Transverse colon (tissue), 4 donors: ENCODE measurements at regions of chr11 and their contacts with region 1.

Region 1: DNA sequence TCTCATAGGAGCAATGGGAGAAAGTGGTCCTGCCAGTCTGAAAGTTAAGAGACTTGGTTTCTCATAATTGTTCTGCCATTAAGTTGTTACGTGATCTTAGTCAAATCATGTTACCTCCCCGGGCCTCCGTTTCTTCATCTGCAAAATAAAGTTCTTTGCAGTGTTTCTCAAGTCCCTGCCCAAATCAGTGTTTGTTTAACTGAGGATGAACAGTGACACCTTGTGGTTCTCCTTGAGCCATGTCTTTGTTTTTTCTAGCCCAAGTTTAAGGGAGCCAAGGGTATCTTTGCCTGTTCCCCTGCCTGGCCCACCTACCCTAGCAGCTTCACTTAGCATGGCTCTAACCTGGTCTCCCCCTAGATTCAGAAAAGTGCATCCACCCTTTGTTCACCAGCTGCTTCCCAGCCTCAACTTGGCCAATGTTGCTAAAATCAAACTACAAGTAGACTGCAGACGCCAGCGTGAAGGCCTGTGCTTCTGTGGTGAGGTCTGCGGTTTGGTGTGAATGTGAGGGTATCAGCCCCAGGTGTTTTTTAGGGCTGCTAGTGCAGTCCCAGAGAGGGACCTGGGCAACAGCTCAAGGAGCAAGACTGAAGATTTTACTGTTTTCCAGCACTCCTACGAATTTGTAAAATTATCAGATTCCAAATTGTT is 35.5 kb downstream of the FZD4 start:
- DNase-seq: no peak
- H3K4me3 ChIP-seq: no peak overlapping the region
- H3K27ac ChIP-seq: no peak overlapping the region
- H3K4me1 ChIP-seq: peaks cover 0 to 23% (median 7%) of the 10 kb centered on the region in 4 donors
- H3K27me3 ChIP-seq: no peaks in the 10 kb centered on the region
- CTCF ChIP-seq: peak; percentile 56 to 68 (median 58)
- EP300 ChIP-seq: no peak
- POLR2A ChIP-seq: no peak

Region 2: DNA sequence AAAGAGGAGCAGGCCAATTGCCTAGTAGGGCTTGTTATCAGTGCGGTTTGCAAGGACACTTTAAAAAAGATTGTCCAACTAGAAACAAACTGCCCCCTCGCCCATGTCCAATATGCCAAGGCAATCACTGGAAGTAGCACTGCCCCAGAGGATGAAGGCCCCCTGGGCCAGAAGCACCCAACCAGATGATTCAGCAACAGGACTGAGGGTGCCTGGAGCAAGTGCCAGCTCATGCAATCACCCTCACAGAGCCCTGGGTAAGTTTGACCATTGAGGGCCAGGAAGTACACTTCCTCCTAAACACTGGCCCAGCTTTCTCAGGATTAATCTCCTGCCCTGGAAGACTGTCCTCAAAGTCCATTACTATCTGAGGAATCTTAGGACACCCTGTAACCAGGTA is 70.8 kb before region 1 on chr11:
- in situ Hi-C with region 1: no loop called
- intact Hi-C with region 1: no loop called
- DNase-seq: no peak
- H3K4me3 ChIP-seq: no peak overlapping the region
- H3K27ac ChIP-seq: no peak overlapping the region
- H3K4me1 ChIP-seq: no peaks in the 10 kb centered on the region
- H3K27me3 ChIP-seq: no peaks in the 10 kb centered on the region
- CTCF ChIP-seq: no peak
- EP300 ChIP-seq: no peak
- POLR2A ChIP-seq: no peak

Region 3: GRCh38 chr11:86869966-86870570 is 49.6 kb before region 1 on chr11:
- in situ Hi-C with region 1: no loop called
- intact Hi-C with region 1: loop called (anchors 5 kb)
- DNase-seq: peak; percentile 44
- H3K4me3 ChIP-seq: no peak overlapping the region
- H3K27ac ChIP-seq: no peak overlapping the region
- H3K4me1 ChIP-seq: no peaks in the 10 kb centered on the region
- H3K27me3 ChIP-seq: no peaks in the 10 kb centered on the region
- CTCF ChIP-seq: peak; percentile 73 to 84 (median 75)
- EP300 ChIP-seq: no peak
- POLR2A ChIP-seq: no peak

Region 4: DNA sequence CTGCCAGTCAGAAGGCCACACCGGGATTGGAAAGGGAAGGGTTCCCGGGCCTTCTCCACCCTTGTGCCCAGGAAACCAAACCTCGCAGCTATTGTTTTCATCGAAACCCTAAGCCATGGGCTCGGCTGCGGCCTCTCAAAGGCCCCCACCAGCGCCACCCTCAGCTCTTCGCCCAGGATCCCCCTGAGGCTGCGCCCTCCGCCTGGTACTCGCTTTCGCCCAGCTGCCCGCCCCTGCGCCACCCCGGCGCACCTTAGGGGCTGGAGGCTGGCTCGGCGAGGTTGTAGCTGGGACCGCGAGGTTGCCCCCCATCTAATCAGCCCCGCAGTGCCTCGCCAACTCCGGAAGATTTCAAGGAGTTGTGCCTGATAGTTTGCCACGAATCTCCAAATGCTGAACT is 13.5 kb before region 1 on chr11:
- in situ Hi-C with region 1: no loop called
- intact Hi-C with region 1: loop called (anchors 2 kb)
- DNase-seq: no peak
- H3K4me3 ChIP-seq: no peak overlapping the region
- H3K27ac ChIP-seq: no peak overlapping the region
- H3K4me1 ChIP-seq: no peaks in the 10 kb centered on the region
- H3K27me3 ChIP-seq: no peaks in the 10 kb centered on the region
- CTCF ChIP-seq: no peak
- EP300 ChIP-seq: no peak
- POLR2A ChIP-seq: no peak